ENCODE measurements at regions of chr7 and their contacts with region 1.

Region 1: DNA sequence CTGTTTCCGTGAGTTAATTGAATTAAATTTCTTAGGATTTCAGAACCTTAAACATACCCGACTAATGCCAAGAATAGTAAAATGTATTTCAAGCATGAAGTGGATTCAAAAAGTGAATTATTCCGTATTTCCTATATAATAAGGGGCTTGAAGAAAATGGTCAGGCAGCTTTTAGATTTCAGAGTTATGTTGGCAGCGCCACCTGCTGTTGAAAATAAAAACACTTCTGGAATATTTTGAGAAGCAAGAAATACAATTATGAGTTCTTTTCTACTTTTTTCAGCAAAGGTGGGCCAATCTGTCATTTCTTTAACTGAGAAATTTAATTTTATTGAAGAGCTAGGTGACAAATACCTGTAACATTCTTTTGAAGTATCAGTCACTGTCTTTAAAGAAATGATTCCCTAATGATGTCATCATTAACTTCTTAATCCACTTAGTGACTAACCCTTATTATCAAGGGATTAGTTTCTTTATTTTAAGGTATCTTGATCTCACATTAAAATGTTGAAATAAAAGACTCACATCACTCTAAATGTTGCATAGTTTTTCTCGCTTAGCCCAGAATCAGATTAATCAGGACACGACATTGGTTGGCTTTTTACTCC is 36.6 kb upstream of the AGR3 start:
- DNase-seq: no peak
- H3K4me3 ChIP-seq: no peak overlapping the region
- H3K27ac ChIP-seq: no peak overlapping the region
- H3K4me1 ChIP-seq: no peaks in the 10 kb centered on the region
- H3K27me3 ChIP-seq: no peaks in the 10 kb centered on the region
- CTCF ChIP-seq: peak; percentile 81

Region 2: GRCh38 chr7:16604054-16604453 is 314.3 kb before region 1 on chr7:
- intact Hi-C with region 1: loop called (anchors 10 kb)
- DNase-seq: no peak
- H3K4me3 ChIP-seq: no peak overlapping the region
- H3K27ac ChIP-seq: no peak overlapping the region
- H3K4me1 ChIP-seq: no peaks in the 10 kb centered on the region
- H3K27me3 ChIP-seq: no peaks in the 10 kb centered on the region
- CTCF ChIP-seq: peak; percentile 35

Region 3: GRCh38 chr7:16634271-16634738 is 284.1 kb before region 1 on chr7:
- intact Hi-C with region 1: no loop called
- DNase-seq: no peak
- H3K4me3 ChIP-seq: no peak overlapping the region
- H3K27ac ChIP-seq: peak overlapping the region; percentile 48
- H3K4me1 ChIP-seq: peaks cover 57% of the 10 kb centered on the region
- H3K27me3 ChIP-seq: no peaks in the 10 kb centered on the region
- CTCF ChIP-seq: no peak

Region 4: GRCh38 chr7:16695621-16696237 is 222.7 kb before region 1 on chr7:
- intact Hi-C with region 1: loop called (anchors 5 kb)
- DNase-seq: no peak
- H3K4me3 ChIP-seq: no peak overlapping the region
- H3K27ac ChIP-seq: no peak overlapping the region
- H3K4me1 ChIP-seq: peaks cover 6% of the 10 kb centered on the region
- H3K27me3 ChIP-seq: no peaks in the 10 kb centered on the region
- CTCF ChIP-seq: peak; percentile 66

Region 5: DNA sequence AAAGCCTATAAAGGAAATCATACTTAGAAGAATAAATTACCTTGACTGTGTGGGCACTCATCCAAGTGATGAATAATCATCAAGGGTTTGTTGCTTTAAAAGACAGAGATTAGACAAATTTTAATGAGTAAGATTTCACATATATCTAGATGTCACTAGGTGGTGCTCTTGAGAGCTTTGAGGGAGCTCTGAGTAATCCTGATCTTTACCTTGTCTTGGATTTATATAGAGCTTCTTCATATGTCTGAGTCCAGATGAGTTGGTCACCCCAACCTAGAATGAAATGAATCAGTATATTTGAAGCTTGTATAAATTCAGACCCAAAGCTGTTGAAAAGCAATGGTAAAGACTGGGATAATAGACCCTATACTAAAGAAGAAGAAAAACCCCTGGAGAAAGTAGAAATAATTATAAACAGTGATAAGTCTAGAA is 117.3 kb before region 1 on chr7:
- intact Hi-C with region 1: loop called (anchors 10 kb)
- DNase-seq: no peak
- H3K4me3 ChIP-seq: no peak overlapping the region
- H3K27ac ChIP-seq: no peak overlapping the region
- H3K4me1 ChIP-seq: no peaks in the 10 kb centered on the region
- H3K27me3 ChIP-seq: no peaks in the 10 kb centered on the region
- CTCF ChIP-seq: peak; percentile 58

Measured in left ventricle myocardium inferior (tissue), 1 donor.